PC-3 (cell line): ENCODE measurements at regions of chr1 and their contacts with region 1.

Region 1: GRCh38 chr1:47179017-47179987 is 10.5 kb downstream of the PDZK1IP1 start:
- DNase-seq: peak; percentile 98
- ATAC-seq: peak; percentile 77
- H3K4me3 ChIP-seq: peak overlapping the region; percentile 78
- H3K27ac ChIP-seq: peak overlapping the region; percentile 58
- H3K4me1 ChIP-seq: peaks cover 11% of the 10 kb centered on the region
- H3K27me3 ChIP-seq: no peaks in the 10 kb centered on the region
- CTCF ChIP-seq: peak; percentile 90

Region 2: DNA sequence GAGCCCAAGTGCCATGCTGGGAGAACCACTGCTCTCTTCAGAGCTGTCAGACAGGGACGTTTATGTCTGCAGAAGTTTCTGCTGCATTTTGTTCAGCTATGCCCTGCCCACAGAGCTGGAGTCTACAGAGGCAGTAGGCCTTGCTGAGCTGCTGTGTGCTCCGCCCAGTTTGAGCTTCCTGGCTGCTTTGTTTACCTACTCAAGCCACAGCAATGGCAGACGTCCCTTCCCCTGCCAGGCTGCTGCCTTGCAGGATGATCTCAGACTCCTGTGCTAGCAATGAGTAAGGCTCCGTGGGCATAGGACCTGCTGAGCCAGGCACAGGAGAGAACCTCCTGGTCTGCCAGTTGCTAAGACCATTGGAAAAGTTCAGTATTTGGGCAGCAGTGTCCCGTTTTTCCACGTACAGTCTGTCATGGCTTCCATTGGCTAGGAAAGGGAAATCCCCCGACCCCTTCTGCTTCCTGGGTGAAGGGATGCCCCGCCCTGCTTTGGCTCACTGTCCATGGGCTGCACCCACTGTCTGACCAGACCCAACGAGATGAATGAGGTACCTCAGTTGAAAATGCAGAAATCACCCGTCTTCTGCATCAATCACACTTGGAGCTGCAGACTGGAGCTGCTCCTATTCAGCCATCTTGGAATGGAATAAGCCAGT is 348.5 kb before region 1 on chr1:
- CTCF ChIA-PET with region 1: no interaction called
- POLR2A ChIA-PET with region 1: no interaction called
- intact Hi-C with region 1: no loop called
- DNase-seq: peak; percentile 43
- ATAC-seq: no peak
- H3K4me3 ChIP-seq: no peak overlapping the region
- H3K27ac ChIP-seq: no peak overlapping the region
- H3K4me1 ChIP-seq: no peaks in the 10 kb centered on the region
- H3K27me3 ChIP-seq: peaks cover 4% of the 10 kb centered on the region; the same call in 1 of the 2 replicates
- CTCF ChIP-seq: no peak

Region 3: GRCh38 chr1:46940307-46940706 is 239.0 kb before region 1 on chr1:
- CTCF ChIA-PET with region 1: no interaction called
- POLR2A ChIA-PET with region 1: no interaction called
- intact Hi-C with region 1: loop called (anchors 10 kb)
- DNase-seq: no peak
- ATAC-seq: no peak
- H3K4me3 ChIP-seq: no peak overlapping the region
- H3K27ac ChIP-seq: no peak overlapping the region
- H3K4me1 ChIP-seq: no peaks in the 10 kb centered on the region
- H3K27me3 ChIP-seq: peaks cover 14% of the 10 kb centered on the region; the same call in 1 of the 2 replicates
- CTCF ChIP-seq: no peak

Region 4: GRCh38 chr1:47104816-47105215 is 74.5 kb before region 1 on chr1:
- CTCF ChIA-PET with region 1: no interaction called
- POLR2A ChIA-PET with region 1: no interaction called
- intact Hi-C with region 1: loop called (anchors 5 kb)
- DNase-seq: peak; percentile 44
- ATAC-seq: no peak
- H3K4me3 ChIP-seq: no peak overlapping the region
- H3K27ac ChIP-seq: no peak overlapping the region
- H3K4me1 ChIP-seq: peaks cover 24% of the 10 kb centered on the region
- H3K27me3 ChIP-seq: no peaks in the 10 kb centered on the region
- CTCF ChIP-seq: 0 out of 2 replicates have a peak, but pooled peaks have one; percentile 34

Region 5: GRCh38 chr1:47241114-47242113 is 62.1 kb after region 1 on chr1:
- CTCF ChIA-PET with region 1: no interaction called
- POLR2A ChIA-PET with region 1: no interaction called
- intact Hi-C with region 1: no loop called
- DNase-seq: no peak
- ATAC-seq: no peak
- H3K4me3 ChIP-seq: no peak overlapping the region
- H3K27ac ChIP-seq: no peak overlapping the region
- H3K4me1 ChIP-seq: no peaks in the 10 kb centered on the region
- H3K27me3 ChIP-seq: no peaks in the 10 kb centered on the region
- CTCF ChIP-seq: no peak

Region 6: GRCh38 chr1:47313915-47314664 is 134.8 kb after region 1 on chr1 and contains the start of gene STIL:
- CTCF ChIA-PET with region 1: no interaction called
- POLR2A ChIA-PET with region 1: no interaction called
- intact Hi-C with region 1: loop called (anchors 10 kb)
- DNase-seq: peak; percentile 99
- ATAC-seq: peak; percentile 96
- H3K4me3 ChIP-seq: peak within 1 kb of the TSS; percentile 98
- H3K27ac ChIP-seq: peak within 1 kb of the TSS; percentile 72
- H3K4me1 ChIP-seq: peaks cover 14% of the 10 kb centered on the region
- H3K27me3 ChIP-seq: no peaks in the 10 kb centered on the region
- CTCF ChIP-seq: no peak
- total RNA-seq, gene STIL: 26.2 and 32.0 TPM in 2 replicates

Region 7: GRCh38 chr1:47399138-47399845 is 220.0 kb after region 1 on chr1:
- CTCF ChIA-PET with region 1: no interaction called
- POLR2A ChIA-PET with region 1: no interaction called
- intact Hi-C with region 1: no loop called
- DNase-seq: no peak
- ATAC-seq: no peak
- H3K4me3 ChIP-seq: no peak overlapping the region
- H3K27ac ChIP-seq: no peak overlapping the region
- H3K4me1 ChIP-seq: no peaks in the 10 kb centered on the region
- H3K27me3 ChIP-seq: no peaks in the 10 kb centered on the region
- CTCF ChIP-seq: no peak

Region 8: DNA sequence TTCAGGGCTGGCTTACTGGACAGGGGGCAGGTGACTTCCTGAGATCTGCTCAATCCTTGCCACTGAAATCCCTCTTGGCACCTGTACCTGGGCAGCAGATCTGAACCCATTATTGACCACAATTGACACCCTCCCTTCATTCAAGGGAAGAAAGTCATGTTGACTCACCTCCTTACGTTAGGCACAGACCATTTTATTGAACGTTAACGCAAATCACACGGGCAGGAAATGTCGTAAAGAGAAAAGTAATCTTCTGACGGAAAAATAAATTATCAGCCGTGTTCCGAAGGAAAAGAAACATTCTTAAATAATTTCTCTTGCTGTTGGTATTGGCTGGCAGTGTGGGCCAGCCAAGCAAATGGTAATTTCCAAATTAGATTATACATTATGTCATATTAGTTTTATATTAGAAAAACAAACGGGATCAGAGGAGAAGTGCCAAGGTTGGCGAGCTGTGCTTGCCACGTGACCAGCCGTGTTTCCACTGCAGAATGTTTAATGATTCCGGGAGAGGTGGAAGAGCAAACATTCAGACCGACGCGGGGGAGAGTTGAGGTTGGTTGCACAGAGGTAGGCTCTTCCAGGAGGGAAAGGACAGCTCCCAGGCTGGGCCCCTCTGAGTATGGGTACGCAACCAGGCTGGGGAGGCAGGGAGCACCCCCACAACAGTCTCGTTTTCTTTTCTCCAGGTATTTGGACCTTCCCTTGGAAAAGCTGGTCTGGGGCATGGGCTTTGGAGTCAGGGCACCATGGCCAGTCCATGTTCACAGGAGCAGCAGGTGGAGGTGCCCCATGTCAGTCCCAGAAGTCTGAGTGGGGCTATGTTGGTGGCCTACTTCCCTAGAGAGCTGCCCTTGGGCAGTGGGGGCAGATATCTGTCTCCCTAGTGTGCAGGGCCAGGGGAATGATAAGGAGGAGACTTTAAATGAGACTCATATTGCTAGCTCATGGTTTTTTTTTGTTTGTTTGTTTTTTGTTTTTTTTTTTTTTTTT is 379.6 kb after region 1 on chr1:
- CTCF ChIA-PET with region 1: no interaction called
- POLR2A ChIA-PET with region 1: no interaction called
- intact Hi-C with region 1: no loop called
- DNase-seq: peak; percentile 66
- ATAC-seq: peak; percentile 31; the same call in 1 of the 2 replicates
- H3K4me3 ChIP-seq: peak overlapping the region; percentile 57
- H3K27ac ChIP-seq: peak overlapping the region; percentile 3; the same call in 1 of the 2 replicates
- H3K4me1 ChIP-seq: peaks cover 34% of the 10 kb centered on the region
- H3K27me3 ChIP-seq: no peaks in the 10 kb centered on the region
- CTCF ChIP-seq: no peak

Region 9: DNA sequence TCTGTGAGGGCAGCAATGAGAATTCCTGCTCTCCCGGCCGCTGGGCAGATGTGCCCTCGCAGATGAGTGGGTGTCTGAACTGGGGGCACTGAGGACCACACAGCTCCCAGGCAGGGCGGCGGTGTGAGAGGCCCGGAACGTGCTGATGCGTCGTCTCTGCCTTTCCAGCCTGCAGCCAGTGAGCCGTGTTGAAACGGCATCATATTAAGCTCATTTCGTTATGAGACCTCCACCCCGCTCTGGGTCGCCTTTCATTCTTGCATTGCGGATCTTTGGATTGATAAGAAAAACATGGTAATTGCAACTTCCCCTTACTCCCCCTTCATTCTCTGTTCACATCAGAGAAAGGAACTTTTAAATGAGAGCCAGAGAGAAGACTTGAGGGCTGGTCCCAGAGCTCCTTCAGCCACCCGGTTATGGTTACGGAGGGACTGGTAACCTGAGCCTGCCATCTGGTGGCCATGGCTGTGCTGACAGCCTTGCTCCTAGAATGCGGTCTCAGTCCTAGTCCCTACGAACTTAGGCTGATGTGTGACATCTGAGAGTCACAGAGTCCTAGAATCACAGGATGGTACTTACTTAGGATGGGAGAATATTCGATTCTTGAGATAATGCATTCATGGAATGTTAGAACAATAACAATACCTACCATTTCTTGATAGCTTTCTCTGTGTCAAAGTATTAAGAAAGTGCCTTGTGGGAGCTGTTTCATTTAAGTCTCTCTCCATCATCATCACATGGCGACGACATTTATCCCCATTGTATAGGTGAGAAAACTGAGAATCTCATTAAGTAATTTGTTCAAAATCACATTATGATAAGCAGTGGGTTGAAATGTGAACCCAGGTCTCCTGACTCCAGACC is 546.9 kb after region 1 on chr1:
- CTCF ChIA-PET with region 1: no interaction called
- POLR2A ChIA-PET with region 1: no interaction called
- intact Hi-C with region 1: loop called (anchors 10 kb)
- DNase-seq: peak; percentile 87
- ATAC-seq: peak; percentile 95
- H3K4me3 ChIP-seq: peak overlapping the region; percentile 46
- H3K27ac ChIP-seq: no peak overlapping the region
- H3K4me1 ChIP-seq: no peaks in the 10 kb centered on the region
- H3K27me3 ChIP-seq: peaks cover 34% of the 10 kb centered on the region
- CTCF ChIP-seq: peak; percentile 93